ENCODE measurements at regions of chr13 and their contacts with region 1.

Region 1: DNA sequence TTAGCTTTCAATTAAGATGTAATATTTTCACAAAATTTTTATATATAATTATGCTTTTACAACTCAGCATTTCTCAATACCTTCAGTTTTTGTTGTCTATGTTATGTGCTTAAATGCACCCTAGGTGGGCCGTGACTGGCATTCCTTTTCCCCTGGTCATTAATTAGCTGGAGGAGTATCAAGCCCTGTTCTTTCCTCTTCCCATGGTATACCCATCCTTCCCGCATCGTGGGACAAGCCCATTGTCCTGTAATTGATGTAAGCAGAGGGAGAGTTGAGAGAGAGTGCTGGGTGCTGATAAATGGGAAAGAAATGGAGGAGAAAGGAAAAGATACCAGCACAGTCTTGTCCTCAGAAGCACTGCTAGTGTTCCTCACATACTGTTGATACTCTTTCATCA is 591.7 kb downstream of the GPC6 start:
- DNase-seq: no peak
- ATAC-seq: no peak
- H3K4me3 ChIP-seq: no peak overlapping the region
- H3K27ac ChIP-seq: no peak overlapping the region
- H3K4me1 ChIP-seq: no peaks in the 10 kb centered on the region
- H3K27me3 ChIP-seq: no peaks in the 10 kb centered on the region
- CTCF ChIP-seq: no peak

Region 2: GRCh38 chr13:93549326-93550005 is 268.9 kb before region 1 on chr13:
- CTCF ChIA-PET with region 1: no interaction called
- POLR2A ChIA-PET with region 1: no interaction called
- in situ Hi-C with region 1: no loop called
- intact Hi-C with region 1: no loop called
- DNase-seq: no peak
- ATAC-seq: no peak
- H3K4me3 ChIP-seq: no peak overlapping the region
- H3K27ac ChIP-seq: no peak overlapping the region
- H3K4me1 ChIP-seq: peaks cover 3% of the 10 kb centered on the region; the same call in 1 of the 2 replicates
- H3K27me3 ChIP-seq: no peaks in the 10 kb centered on the region
- CTCF ChIP-seq: no peak

Region 3: DNA sequence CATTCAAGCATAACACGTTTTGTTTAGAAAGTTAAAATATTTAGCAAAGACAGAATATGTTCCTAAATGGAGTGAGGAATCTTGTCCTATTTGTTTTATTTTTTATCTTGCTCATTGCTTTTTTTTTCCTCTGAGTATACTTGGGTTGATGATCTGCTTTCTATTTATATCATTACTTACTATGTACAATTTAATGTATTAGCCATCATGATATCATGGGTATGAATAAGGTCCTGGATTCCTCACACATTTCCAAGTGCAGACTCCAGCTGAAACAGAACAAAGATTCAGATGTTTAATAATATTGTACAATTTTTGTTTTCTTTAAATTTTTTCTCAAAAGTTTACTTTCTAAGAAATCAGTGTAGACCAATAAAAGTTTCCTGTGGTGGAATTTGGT is 203.6 kb before region 1 on chr13:
- CTCF ChIA-PET with region 1: no interaction called
- POLR2A ChIA-PET with region 1: no interaction called
- in situ Hi-C with region 1: no loop called
- intact Hi-C with region 1: no loop called
- DNase-seq: no peak
- ATAC-seq: no peak
- H3K4me3 ChIP-seq: no peak overlapping the region
- H3K27ac ChIP-seq: no peak overlapping the region
- H3K4me1 ChIP-seq: no peaks in the 10 kb centered on the region
- H3K27me3 ChIP-seq: no peaks in the 10 kb centered on the region
- CTCF ChIP-seq: no peak

Region 4: DNA sequence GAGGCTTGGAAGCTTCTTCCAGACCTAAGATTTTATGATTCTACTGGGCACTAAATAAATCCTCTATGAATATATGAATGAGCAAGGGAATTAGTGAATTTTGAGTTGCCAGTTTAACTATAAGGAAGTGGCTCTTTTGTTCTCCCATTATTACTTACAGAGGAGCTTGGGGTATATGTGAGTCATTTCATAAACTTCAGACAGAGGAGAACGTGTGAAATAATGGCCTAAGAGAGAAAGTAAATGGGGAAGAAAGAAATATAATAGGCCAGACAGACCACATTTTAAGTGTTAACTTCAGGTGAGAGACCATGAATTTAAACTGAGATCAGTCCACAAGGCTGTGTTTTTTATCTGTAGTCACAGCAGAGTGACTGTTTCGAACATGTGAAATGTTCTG is 20.9 kb before region 1 on chr13:
- CTCF ChIA-PET with region 1: no interaction called
- POLR2A ChIA-PET with region 1: no interaction called
- in situ Hi-C with region 1: no loop called
- intact Hi-C with region 1: loop called (anchors 1 kb)
- DNase-seq: no peak
- ATAC-seq: no peak
- H3K4me3 ChIP-seq: no peak overlapping the region
- H3K27ac ChIP-seq: no peak overlapping the region
- H3K4me1 ChIP-seq: no peaks in the 10 kb centered on the region
- H3K27me3 ChIP-seq: no peaks in the 10 kb centered on the region
- CTCF ChIP-seq: no peak

Measured in Panc1 (cell line).